ENCODE measurements at regions of chr11 and their contacts with region 1.

Region 1: GRCh38 chr11:122853971-122854446 is 15.7 kb downstream of the CRTAM start:
- DNase-seq: peak; percentile 72
- H3K4me3 ChIP-seq: no peak overlapping the region
- H3K27ac ChIP-seq: no peak overlapping the region
- H3K4me1 ChIP-seq: no peaks in the 10 kb centered on the region
- H3K27me3 ChIP-seq: no peaks in the 10 kb centered on the region
- CTCF ChIP-seq: peak in 3 of 4 experiments; percentile 74 to 79 (median 74)
- POLR2A ChIP-seq: no peak

Region 2: DNA sequence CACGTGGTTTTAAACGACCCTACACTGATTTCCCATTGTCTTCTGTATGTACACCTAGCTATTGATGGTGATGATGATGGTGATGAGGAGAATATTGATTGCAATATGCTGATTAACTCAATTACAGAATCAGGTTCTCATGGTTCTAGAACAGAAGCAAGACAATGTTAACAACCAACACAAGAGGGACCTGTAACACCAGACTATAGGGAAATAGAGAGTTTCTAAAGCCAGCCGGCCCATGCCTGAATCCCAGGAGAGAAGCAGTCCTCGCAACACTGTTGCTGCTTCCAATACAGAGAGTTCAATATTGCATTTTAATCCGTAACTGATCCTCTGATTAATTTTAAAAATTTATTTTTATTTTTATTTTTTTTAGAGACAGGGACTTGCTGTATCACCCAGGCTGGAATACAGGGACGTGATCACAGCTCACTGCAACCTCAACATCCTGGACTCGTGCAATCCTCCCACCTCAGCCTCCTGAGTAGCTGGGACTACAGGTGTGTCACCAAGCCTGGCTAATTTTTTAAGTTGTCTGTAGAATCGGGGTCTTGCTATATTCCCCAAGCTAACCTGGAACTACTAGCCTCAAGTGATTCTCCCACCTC is 220.7 kb before region 1 on chr11:
- intact Hi-C with region 1: loop called (anchors 5 kb)
- DNase-seq: no peak
- H3K4me3 ChIP-seq: no peak overlapping the region
- H3K27ac ChIP-seq: no peak overlapping the region
- H3K4me1 ChIP-seq: no peaks in the 10 kb centered on the region
- H3K27me3 ChIP-seq: no peaks in the 10 kb centered on the region
- CTCF ChIP-seq: peak in 2 of 4 experiments; percentile 30 to 36
- POLR2A ChIP-seq: no peak

Region 3: GRCh38 chr11:122933416-122933815 is 79.4 kb after region 1 on chr11:
- intact Hi-C with region 1: no loop called
- DNase-seq: no peak
- H3K4me3 ChIP-seq: no peak overlapping the region
- H3K27ac ChIP-seq: no peak overlapping the region
- H3K4me1 ChIP-seq: no peaks in the 10 kb centered on the region
- H3K27me3 ChIP-seq: no peaks in the 10 kb centered on the region
- CTCF ChIP-seq: no peak
- POLR2A ChIP-seq: no peak